PC-9 (cell line): ENCODE measurements at regions of chr10 and their contacts with region 1.

Region 1: GRCh38 chr10:26881600-26882331 is 21.0 kb upstream of the ABI1 start:
- DNase-seq: peak in 1 of 2 experiments; percentile 53
- H3K4me3 ChIP-seq: no peak overlapping the region
- H3K27ac ChIP-seq: no peak overlapping the region
- H3K4me1 ChIP-seq: no peaks in the 10 kb centered on the region
- H3K27me3 ChIP-seq: no peaks in the 10 kb centered on the region
- CTCF ChIP-seq: peak; percentile 67

Region 2: DNA sequence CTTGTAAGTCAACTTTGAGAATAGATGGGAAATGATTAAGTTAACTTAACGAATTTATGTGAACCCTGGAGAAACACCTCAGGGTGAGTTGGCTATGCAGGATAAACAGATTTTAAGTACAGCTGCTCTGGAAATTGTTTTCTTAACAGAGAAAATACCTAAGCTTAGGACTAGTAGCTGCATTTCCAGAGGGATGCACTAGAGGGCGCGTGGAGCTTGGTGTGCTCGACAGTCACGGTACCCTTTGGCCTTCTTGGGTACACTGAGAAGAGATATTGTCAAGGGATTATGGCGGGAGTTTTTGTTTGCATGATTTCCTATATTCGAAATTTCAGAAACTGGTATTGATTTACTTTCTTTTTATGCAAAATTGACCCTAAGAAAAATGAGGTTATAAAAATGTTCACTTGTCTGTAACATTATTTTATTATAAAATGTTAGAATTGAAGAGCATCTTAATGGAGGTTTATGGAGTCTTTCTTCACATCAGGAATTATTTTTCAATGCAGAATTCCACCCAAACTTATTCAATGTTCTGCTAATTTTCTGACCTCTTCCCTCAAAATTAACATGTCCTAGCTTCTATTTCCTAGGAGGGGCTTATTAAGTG is 1006.1 kb before region 1 on chr10:
- CTCF ChIA-PET with region 1: no interaction called
- POLR2A ChIA-PET with region 1: no interaction called
- intact Hi-C with region 1: loop called (anchors 5 kb)
- DNase-seq: peak in 1 of 2 experiments; percentile 37
- H3K4me3 ChIP-seq: no peak overlapping the region
- H3K27ac ChIP-seq: no peak overlapping the region
- H3K4me1 ChIP-seq: no peaks in the 10 kb centered on the region
- H3K27me3 ChIP-seq: no peaks in the 10 kb centered on the region
- CTCF ChIP-seq: peak; percentile 84

Region 3: GRCh38 chr10:26612151-26612915 is 269.4 kb before region 1 on chr10:
- CTCF ChIA-PET with region 1: no interaction called
- POLR2A ChIA-PET with region 1: no interaction called
- intact Hi-C with region 1: loop called (anchors 10 kb)
- DNase-seq: no peak
- H3K4me3 ChIP-seq: no peak overlapping the region
- H3K27ac ChIP-seq: no peak overlapping the region
- H3K4me1 ChIP-seq: no peaks in the 10 kb centered on the region
- H3K27me3 ChIP-seq: peaks cover 35% of the 10 kb centered on the region
- CTCF ChIP-seq: no peak

Region 4: DNA sequence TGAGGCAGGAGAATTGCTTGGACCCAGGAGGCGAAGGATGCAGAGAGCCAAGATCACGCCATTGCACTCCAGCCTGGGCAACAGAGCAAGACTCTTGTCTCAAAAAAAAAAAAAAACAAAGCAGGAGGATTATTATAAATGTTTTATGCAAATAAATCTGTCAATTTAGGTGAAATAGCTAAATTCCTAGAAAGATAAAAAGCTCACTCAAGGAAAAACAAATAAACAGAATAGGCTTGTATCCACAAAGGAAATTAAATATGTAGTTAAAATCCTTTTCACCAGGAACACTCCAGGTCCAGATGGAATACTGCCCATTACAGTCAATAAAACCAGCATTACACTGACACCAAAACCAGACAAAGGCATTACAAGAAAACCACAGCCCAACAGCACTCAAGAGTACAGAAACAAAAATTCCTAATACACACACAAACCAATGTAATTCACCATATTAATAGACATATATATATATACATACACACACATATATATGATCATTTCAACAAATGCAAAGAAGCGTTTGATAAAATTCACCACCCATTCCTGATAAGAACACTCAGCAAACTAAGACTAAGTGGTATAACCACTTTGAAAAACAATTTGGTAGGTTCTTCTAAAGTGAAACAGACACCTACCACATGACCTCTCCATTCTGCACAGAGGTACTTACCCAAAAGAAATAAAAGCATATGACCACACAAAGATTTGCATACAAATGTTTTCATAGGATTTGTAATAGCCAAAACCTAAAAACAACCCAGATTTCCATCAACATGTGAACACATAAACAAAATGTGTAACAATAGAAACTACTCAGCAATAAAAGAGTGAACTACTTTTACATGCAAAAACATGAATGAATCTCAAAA is 59.8 kb before region 1 on chr10:
- CTCF ChIA-PET with region 1: interaction called, 15 read pairs
- POLR2A ChIA-PET with region 1: no interaction called
- intact Hi-C with region 1: no loop called
- DNase-seq: no peak
- H3K4me3 ChIP-seq: no peak overlapping the region
- H3K27ac ChIP-seq: no peak overlapping the region
- H3K4me1 ChIP-seq: no peaks in the 10 kb centered on the region
- H3K27me3 ChIP-seq: no peaks in the 10 kb centered on the region
- CTCF ChIP-seq: no peak

Region 5: DNA sequence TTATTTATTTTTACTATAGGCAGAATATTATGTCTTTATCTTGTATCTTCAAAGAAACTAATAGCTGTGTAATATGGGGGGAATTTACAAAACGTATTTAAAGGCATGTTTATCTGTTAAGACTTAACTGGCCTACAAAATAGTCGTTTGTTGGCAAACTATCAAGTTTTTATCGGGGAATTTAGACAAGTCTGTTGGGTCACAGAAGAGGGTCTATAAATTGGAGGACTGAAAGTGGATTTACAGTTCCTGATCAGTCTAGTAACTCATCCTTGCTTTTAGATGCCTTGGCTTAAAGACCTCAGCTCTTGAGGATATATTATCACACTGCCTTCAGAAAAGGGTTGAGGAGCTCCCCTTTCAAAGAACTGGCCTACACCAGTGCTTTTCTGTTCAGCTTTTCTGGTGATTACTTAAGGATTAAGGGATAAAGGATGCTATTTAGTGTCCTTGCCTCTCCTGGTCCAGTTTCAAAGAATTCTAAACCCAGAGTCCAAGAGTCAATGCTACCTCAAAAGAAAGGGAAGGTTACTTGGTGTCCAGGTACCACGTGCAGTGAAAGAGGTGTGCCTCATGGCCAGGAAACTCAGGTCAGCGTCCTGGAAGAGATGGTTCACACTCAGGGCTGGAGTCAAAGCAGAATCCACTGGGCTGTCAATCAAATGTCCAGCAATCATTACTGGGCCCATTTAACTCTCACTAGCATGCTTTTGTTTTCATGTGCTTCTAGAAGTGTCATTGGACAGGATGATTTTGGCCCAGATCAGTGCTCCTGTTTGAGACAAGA is 21.9 kb after region 1 on chr10:
- CTCF ChIA-PET with region 1: no interaction called
- POLR2A ChIA-PET with region 1: no interaction called
- intact Hi-C with region 1: no loop called
- DNase-seq: no peak
- H3K4me3 ChIP-seq: no peak overlapping the region
- H3K27ac ChIP-seq: no peak overlapping the region
- H3K4me1 ChIP-seq: no peaks in the 10 kb centered on the region
- H3K27me3 ChIP-seq: no peaks in the 10 kb centered on the region
- CTCF ChIP-seq: no peak

Region 6: GRCh38 chr10:27252267-27253000 is 370.7 kb after region 1 on chr10:
- CTCF ChIA-PET with region 1: no interaction called
- POLR2A ChIA-PET with region 1: interaction called, 17 read pairs
- intact Hi-C with region 1: no loop called
- DNase-seq: peak; percentile 44 to 88
- H3K4me3 ChIP-seq: peak overlapping the region; percentile 70
- H3K27ac ChIP-seq: peak overlapping the region; percentile 62
- H3K4me1 ChIP-seq: no peaks in the 10 kb centered on the region
- H3K27me3 ChIP-seq: no peaks in the 10 kb centered on the region
- CTCF ChIP-seq: peak; percentile 69